ENCODE measurements at regions of chr3 and their contacts with region 1.

Region 1: GRCh38 chr3:192444096-192444790 is 283.1 kb downstream of the FGF12 start:
- DNase-seq: peak; percentile 13
- H3K4me3 ChIP-seq: no peak overlapping the region
- H3K27ac ChIP-seq: no peak overlapping the region
- H3K27me3 ChIP-seq: no peaks in the 10 kb centered on the region
- CTCF ChIP-seq: peak; percentile 99

Region 2: DNA sequence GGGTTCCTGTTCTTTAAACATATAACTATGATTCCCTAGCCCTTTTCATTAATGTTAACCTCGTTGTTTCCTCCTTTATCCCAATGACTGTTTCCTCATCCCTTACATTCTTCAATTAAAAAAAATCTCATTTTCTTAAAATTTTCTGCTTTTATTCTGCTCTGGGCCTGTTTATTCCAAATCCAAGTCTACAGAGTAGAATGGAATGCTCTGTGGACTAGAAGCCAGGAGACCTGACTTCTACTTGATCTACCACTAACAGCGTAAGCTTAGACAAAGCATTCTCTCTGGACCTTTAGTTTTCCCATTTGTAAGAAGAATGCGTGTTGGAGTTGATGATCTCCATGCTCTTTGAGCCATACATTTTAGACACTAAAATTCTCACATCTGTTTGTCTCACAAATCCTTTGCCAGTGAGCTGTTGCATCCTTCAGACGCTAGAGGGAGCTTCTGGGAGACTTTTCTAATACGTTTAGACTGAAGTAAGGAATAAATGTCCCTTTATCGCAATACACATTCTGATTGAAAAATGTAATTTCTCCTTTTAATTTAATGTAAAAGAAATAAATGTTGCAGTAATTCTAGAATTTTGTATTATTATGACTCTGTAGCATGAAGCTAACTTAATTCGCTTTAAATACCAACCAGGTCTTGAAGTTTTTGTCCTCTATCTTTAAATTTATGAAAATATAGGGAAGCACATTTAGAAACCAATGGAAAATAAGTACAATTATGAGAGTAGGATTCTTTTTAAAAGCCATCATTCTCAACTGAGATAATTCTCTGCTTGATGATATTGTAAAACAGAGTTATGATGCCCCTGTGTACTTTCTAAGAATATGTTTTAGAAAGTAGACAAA is 1560.0 kb before region 1 on chr3:
- CTCF ChIA-PET with region 1: interaction called, 40 read pairs
- POLR2A ChIA-PET with region 1: no interaction called
- DNase-seq: peak; percentile 38
- H3K4me3 ChIP-seq: no peak overlapping the region
- H3K27ac ChIP-seq: no peak overlapping the region
- H3K27me3 ChIP-seq: no peaks in the 10 kb centered on the region
- CTCF ChIP-seq: peak; percentile 97

Region 3: DNA sequence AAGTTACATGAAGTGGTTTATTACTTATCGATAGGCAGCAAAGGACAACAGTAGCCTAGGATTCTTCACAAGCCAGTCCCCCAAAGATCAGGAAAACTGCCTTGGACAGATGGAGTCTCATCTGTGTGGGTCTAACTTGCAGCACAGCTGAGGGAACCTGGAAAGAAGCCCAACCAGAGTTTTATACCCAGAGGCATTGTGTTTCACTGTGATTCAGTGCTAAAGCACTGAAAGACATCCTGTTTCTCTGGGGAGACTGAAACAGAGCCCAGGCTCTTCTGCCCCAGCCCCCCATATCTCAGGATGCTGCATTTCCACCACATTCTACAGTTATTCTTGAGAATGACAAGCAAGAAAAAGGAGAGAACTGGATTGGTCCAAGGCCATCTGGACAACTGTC is 1031.5 kb before region 1 on chr3:
- CTCF ChIA-PET with region 1: interaction called, 17 read pairs
- POLR2A ChIA-PET with region 1: no interaction called
- DNase-seq: peak; percentile 86
- H3K4me3 ChIP-seq: no peak overlapping the region
- H3K27ac ChIP-seq: no peak overlapping the region
- H3K27me3 ChIP-seq: no peaks in the 10 kb centered on the region
- CTCF ChIP-seq: no peak

Region 4: GRCh38 chr3:192372616-192373015 is 71.6 kb before region 1 on chr3:
- CTCF ChIA-PET with region 1: interaction called, 14 read pairs
- POLR2A ChIA-PET with region 1: no interaction called
- DNase-seq: no peak
- H3K4me3 ChIP-seq: no peak overlapping the region
- H3K27ac ChIP-seq: no peak overlapping the region
- H3K27me3 ChIP-seq: no peaks in the 10 kb centered on the region
- CTCF ChIP-seq: no peak

Region 5: DNA sequence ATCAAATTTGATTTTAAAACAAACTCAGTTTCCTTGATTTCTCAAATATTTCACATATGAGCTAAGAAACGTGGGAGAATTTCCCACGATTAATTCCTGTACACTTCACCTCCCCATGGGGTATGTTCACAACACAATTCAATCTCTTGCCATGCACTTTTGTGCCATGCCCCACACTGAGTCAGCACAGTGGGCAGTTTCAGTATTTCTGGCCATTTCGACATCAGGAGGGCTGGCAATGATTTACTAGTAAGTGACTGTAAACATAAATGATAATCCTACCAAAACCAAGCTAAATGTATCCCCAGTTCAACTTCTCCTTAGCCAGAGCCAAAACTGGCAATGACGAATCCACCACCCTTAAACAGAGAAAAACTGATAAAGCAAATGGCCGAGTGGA is 10.5 kb before region 1 on chr3:
- CTCF ChIA-PET with region 1: interaction called, 28 read pairs
- POLR2A ChIA-PET with region 1: no interaction called
- DNase-seq: no peak
- H3K4me3 ChIP-seq: no peak overlapping the region
- H3K27ac ChIP-seq: no peak overlapping the region
- H3K27me3 ChIP-seq: no peaks in the 10 kb centered on the region
- CTCF ChIP-seq: no peak

Region 6: GRCh38 chr3:192482809-192483208 is 38.6 kb after region 1 on chr3:
- CTCF ChIA-PET with region 1: no interaction called
- POLR2A ChIA-PET with region 1: no interaction called
- DNase-seq: no peak
- H3K4me3 ChIP-seq: no peak overlapping the region
- H3K27ac ChIP-seq: no peak overlapping the region
- H3K27me3 ChIP-seq: no peaks in the 10 kb centered on the region
- CTCF ChIP-seq: no peak